Dendritic cell treated with granulocyte-macrophage colony-stimulating factor and Interleukin-4, amounts not matched to agents 40 ng/mL and 50 ng/mL, for 4 days (primary cell): ENCODE measurements at regions of chr7 and their contacts with region 1.

Region 1: DNA sequence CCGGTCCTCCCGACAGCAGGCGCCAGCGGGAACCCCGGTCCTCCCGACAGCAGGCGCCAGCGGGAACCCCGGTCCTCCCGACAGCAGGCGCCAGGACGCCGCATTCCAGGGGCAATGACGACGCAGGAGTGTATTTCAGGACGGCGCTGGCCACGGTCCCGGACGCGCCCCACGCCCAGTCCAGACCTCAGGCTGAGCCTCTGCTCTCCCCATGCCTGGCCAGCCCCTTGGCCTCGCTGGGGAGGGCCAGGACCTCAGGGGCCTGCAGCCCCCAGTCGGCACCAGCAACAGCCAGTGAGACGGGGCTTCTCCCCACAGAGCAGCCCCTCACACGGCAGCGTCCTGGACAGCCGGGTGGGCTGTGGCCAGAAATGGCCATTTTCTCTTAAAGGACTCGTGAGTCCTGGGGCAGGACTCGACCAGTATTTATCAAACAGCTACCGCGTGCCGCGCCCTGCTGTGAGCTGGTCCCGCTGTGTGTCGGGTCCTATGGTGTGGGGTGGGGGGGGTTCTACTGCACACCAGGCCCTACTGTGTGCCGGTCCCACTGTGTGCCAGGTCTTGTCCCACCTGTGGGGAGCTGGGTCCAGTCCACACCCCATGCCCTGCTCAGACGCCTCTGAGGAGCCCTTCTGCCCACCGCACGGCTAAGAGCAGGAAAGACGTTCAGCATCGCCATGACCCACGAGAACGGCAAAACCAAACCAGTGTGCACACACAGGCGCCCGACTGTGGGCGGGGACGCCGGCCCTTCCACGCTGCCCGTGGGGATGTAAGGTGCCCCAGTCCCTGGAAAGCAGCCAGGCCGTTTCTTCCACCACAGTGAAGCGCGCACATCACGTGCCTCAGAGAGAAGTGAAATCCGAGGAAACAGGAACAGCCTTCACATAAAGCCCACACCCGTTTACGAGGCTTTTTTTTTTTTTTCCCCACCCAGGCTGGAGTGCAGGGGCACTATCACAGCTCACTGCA is 33.3 kb downstream of the GET4 start:
- H3K4me3 Mint-ChIP-seq: peak overlapping the region; percentile 55
- H3K27ac Mint-ChIP-seq: peak overlapping the region; percentile 72
- H3K4me1 Mint-ChIP-seq: peaks cover 77% of the 10 kb centered on the region
- H3K27me3 Mint-ChIP-seq: no peaks in the 10 kb centered on the region

Region 2: DNA sequence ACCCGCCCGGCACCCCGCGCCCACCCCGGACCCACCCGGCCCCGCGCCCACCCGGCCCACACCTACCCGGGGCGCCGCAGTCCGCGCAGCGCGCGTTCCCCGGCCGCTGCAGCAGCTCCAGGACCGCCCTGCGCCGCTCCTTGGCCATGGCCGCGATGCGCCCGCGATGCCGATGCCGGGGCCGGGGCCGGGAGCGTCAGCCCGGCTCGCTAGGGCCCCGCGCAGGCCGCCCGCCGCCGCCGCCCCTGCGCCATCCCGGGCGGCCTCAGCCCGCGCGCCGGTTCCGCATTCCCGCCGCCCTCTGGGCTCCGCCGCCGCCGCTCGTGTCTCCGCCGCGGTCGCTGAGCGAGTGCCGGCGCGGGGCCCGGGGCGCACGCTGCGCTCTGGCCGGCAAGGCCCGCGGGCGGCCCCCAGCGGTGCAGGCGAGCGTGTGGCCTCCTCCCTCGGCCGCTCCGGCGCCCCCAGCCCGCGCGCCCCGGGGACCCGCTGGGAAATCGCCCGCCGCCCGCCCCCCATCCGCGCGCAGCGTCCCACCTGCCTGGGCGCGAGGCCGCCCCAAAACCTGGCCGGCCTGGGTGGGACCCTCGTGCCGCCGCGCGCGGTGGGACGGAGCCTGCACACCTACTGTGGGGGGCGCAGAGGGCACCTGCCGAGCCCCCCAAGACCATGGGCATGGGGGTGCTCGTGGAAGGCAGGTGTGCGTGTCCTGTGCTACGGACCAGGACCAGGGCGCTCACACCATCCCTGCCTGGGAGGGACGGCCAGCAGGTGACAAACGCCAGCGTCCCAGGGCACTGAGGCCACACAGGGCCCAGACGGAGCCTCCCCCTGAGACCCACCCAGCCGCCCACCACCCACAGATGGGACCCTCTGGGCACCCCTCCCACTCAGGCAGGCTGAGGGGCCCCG is 44.9 kb after region 1 on chr7 and contains the start of gene ADAP1:
- intact Hi-C with region 1: loop called (anchors 2 kb)
- H3K4me3 Mint-ChIP-seq: peak within 1 kb of the TSS; percentile 78
- H3K27ac Mint-ChIP-seq: peak within 1 kb of the TSS; percentile 78
- H3K4me1 Mint-ChIP-seq: peaks cover 68% of the 10 kb centered on the region
- H3K27me3 Mint-ChIP-seq: peaks cover 15% of the 10 kb centered on the region